Activated CD8-positive, alpha-beta T cell treated with anti-CD3 and anti-CD28 coated beads for 36 hours (primary cell): ENCODE measurements at regions of chr10 and their contacts with region 1.

Region 1: GRCh38 chr10:32445740-32446535 is at the start of gene CCDC7:
- DNase-seq: peak; percentile 83
- ATAC-seq: peak; percentile 98
- H3K4me3 Mint-ChIP-seq: peak within 1 kb of the TSS; percentile 99
- H3K27ac Mint-ChIP-seq: peak within 1 kb of the TSS; percentile 100
- H3K4me1 Mint-ChIP-seq: peaks cover 10% of the 10 kb centered on the region
- H3K27me3 Mint-ChIP-seq: no peaks in the 10 kb centered on the region
- CTCF ChIP-seq: peak; percentile 45
- total RNA-seq, gene CCDC7: 5.5 to 10.4 TPM

Region 2: GRCh38 chr10:32378363-32379317 is 67.3 kb before region 1 on chr10:
- CTCF ChIA-PET with region 1: interaction called, 9 read pairs
- POLR2A ChIA-PET with region 1: interaction called, 10 read pairs
- intact Hi-C with region 1: loop called (anchors 2 kb)
- DNase-seq: peak; percentile 98
- ATAC-seq: peak; percentile 95
- H3K4me3 Mint-ChIP-seq: no peak overlapping the region
- H3K27ac Mint-ChIP-seq: no peak overlapping the region
- H3K4me1 Mint-ChIP-seq: peaks cover 21% of the 10 kb centered on the region
- H3K27me3 Mint-ChIP-seq: no peaks in the 10 kb centered on the region
- CTCF ChIP-seq: no peak

Region 3: DNA sequence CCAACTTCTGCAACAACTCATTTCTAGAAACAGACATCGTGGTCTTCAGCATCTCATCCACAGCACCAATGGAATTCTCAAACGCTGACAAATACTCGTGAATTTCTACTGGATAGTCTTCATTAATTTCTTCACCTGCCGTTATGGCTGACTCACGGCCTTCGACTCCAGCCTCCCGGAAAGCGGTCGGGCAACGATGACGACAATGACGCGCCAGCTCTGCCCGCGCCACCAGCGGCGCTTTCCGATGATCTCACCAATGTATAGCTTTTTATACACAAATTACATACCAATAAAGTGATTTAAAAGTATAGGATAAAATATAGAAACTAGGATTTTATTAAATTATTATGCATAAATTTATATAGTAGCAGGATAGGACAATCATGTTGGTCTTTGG is 65.7 kb after region 1 on chr10:
- CTCF ChIA-PET with region 1: no interaction called
- POLR2A ChIA-PET with region 1: no interaction called
- intact Hi-C with region 1: no loop called
- DNase-seq: no peak
- ATAC-seq: no peak
- H3K4me3 Mint-ChIP-seq: no peak overlapping the region
- H3K27ac Mint-ChIP-seq: no peak overlapping the region
- H3K4me1 Mint-ChIP-seq: no peaks in the 10 kb centered on the region
- H3K27me3 Mint-ChIP-seq: no peaks in the 10 kb centered on the region
- CTCF ChIP-seq: no peak